PC-3 (cell line): ENCODE measurements at regions of chr10 and their contacts with region 1.

Region 1: DNA sequence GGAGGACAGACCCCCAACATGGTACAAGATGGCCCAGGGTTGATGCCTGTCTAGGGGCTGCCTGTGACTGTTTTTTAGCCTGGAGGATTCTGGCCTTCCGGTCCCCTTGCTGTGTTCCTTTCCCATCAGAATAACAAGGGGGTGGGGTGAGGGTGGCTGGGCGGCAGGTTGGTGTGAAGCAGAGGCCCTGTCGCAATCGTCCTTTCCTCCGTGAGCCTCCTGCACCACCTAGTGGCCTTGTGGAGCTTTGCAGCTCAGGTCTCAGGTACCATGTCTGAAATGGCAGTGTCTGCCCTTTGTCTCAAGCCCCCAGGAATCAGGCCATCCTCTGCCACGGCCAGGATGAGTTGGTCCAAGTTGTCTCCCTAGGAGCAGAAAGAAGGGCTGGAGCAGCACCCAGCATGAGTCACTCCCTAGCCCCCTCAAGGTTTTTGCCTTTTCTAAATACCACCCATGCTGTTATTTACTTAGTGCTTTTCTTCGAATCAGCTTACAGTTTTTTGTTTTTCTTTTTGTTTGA is 24.2 kb downstream of the TACR2 start:
- DNase-seq: peak; percentile 99
- ATAC-seq: peak; percentile 89
- H3K4me3 ChIP-seq: no peak overlapping the region
- H3K27ac ChIP-seq: no peak overlapping the region
- H3K4me1 ChIP-seq: peaks cover 17% of the 10 kb centered on the region
- H3K27me3 ChIP-seq: no peaks in the 10 kb centered on the region
- CTCF ChIP-seq: peak; percentile 100

Region 2: GRCh38 chr10:69004821-69005220 is 387.7 kb before region 1 on chr10:
- CTCF ChIA-PET with region 1: no interaction called
- POLR2A ChIA-PET with region 1: no interaction called
- intact Hi-C with region 1: loop called (anchors 10 kb)
- DNase-seq: peak; percentile 80
- ATAC-seq: peak; percentile 66
- H3K4me3 ChIP-seq: no peak overlapping the region
- H3K27ac ChIP-seq: no peak overlapping the region
- H3K4me1 ChIP-seq: 0 out of 2 replicates have a peak, but pooled peaks cover 7% of the 10 kb centered on the region
- H3K27me3 ChIP-seq: no peaks in the 10 kb centered on the region
- CTCF ChIP-seq: peak; percentile 89

Region 3: GRCh38 chr10:69237528-69238159 is 154.9 kb before region 1 on chr10:
- CTCF ChIA-PET with region 1: interaction called, 6 read pairs
- POLR2A ChIA-PET with region 1: no interaction called
- intact Hi-C with region 1: loop called (anchors 1 kb)
- DNase-seq: peak; percentile 98
- ATAC-seq: peak; percentile 94
- H3K4me3 ChIP-seq: no peak overlapping the region
- H3K27ac ChIP-seq: no peak overlapping the region
- H3K4me1 ChIP-seq: peaks cover 31% of the 10 kb centered on the region
- H3K27me3 ChIP-seq: no peaks in the 10 kb centered on the region
- CTCF ChIP-seq: peak; percentile 99